Heart left ventricle (tissue), 16 donors: ENCODE measurements at regions of chr7 and their contacts with region 1.

Region 1: DNA sequence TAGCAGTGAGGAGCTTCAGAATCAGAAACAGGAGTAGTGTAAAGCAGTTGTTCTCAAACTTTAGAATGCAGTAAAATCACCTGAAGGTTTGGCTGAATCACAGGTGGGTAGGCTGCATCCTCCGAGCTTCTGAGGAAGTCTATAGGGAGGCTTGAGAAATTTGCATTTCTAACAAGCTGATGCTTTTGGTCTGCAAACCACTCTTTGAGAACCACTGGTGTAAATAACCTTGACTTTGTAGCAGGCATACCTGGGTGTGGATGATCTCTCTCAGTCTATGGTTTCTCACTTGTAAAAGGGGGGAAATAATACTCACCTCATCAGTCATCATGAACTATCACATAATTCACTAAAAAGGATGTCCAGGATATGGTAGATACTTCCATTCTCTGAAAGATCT is 118.1 kb downstream of the SRI start:
- DNase-seq: no peak
- ATAC-seq: no peak
- H3K4me3 ChIP-seq: no peak overlapping the region
- H3K27ac ChIP-seq: no peak overlapping the region
- H3K4me1 ChIP-seq: peaks cover 0 to 5% (median 0%) of the 10 kb centered on the region in 12 donors
- H3K27me3 ChIP-seq: no peaks in the 10 kb centered on the region
- CTCF ChIP-seq: no peak
- POLR2A ChIP-seq: no peak

Region 2: GRCh38 chr7:87806150-87806549 is 295.6 kb before region 1 on chr7:
- intact Hi-C with region 1: loop called in 3 of 10 experiments (anchors 5 to 10 kb)
- DNase-seq: no peak
- ATAC-seq: no peak
- H3K4me3 ChIP-seq: no peak overlapping the region
- H3K27ac ChIP-seq: no peak overlapping the region
- H3K4me1 ChIP-seq: no peaks in the 10 kb centered on the region
- H3K27me3 ChIP-seq: no peaks in the 10 kb centered on the region
- CTCF ChIP-seq: no peak
- POLR2A ChIP-seq: no peak

Region 3: GRCh38 chr7:87933945-87934698 is 167.6 kb before region 1 on chr7 and contains the start of gene ADAM22:
- intact Hi-C with region 1: loop called in 2 of 10 experiments (anchors 10 kb)
- DNase-seq: peak; percentile 88 to 91 (median 89)
- ATAC-seq: peak; percentile 96 to 100 (median 100)
- H3K4me3 ChIP-seq: peak within 1 kb of the TSS; percentile 58 to 93 (median 79)
- H3K27ac ChIP-seq: peak within 1 kb of the TSS in 6 of 12 donors; percentile 28 to 79 (median 55)
- H3K4me1 ChIP-seq: peaks cover 0 to 14% (median 6%) of the 10 kb centered on the region in 12 donors
- H3K27me3 ChIP-seq: no peaks in the 10 kb centered on the region
- CTCF ChIP-seq: peak in 4 of 12 donors; percentile 9 to 42 (median 18)
- POLR2A ChIP-seq: no peak
- total RNA-seq, gene ADAM22: 0.75 to 3.4 (median 1.5) TPM

Region 4: DNA sequence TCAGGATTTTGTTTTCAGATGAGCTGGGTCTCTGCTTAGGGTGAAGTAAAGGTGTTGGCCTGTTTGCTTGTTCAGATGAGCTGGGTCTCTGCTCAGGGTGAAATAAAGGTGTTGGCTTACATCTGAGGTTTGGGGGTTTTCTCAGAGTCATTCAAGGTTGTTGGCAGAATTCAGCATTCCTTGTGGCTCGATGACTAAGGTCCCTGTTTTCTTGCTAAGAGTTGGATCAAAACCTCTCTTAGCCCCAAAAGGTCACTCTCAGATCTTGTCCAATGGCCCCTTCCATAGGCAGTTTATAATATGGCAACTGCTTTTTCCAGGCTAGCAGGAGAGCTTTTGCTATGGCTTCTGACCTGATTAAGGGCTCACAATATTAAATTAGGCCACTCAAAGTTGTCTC is 61.1 kb before region 1 on chr7:
- intact Hi-C with region 1: loop called in 1 of 10 experiments (anchors 10 kb)
- DNase-seq: no peak
- ATAC-seq: no peak
- H3K4me3 ChIP-seq: no peak overlapping the region
- H3K27ac ChIP-seq: no peak overlapping the region
- H3K4me1 ChIP-seq: peaks cover 0 to 4% (median 0%) of the 10 kb centered on the region in 12 donors
- H3K27me3 ChIP-seq: no peaks in the 10 kb centered on the region
- CTCF ChIP-seq: no peak
- POLR2A ChIP-seq: no peak

Region 5: GRCh38 chr7:88169717-88170320 is 68.0 kb after region 1 on chr7:
- intact Hi-C with region 1: loop called in 1 of 10 experiments (anchors 10 kb)
- DNase-seq: no peak
- ATAC-seq: no peak
- H3K4me3 ChIP-seq: no peak overlapping the region
- H3K27ac ChIP-seq: no peak overlapping the region
- H3K4me1 ChIP-seq: peaks cover 0 to 6% (median 0%) of the 10 kb centered on the region in 12 donors
- H3K27me3 ChIP-seq: no peaks in the 10 kb centered on the region
- CTCF ChIP-seq: peak; percentile 36 to 68 (median 52)
- POLR2A ChIP-seq: no peak

Region 6: GRCh38 chr7:88218836-88219605 is 117.3 kb after region 1 on chr7:
- intact Hi-C with region 1: no loop called
- DNase-seq: peak; percentile 42 to 65 (median 49)
- ATAC-seq: peak; percentile 20 to 69 (median 48)
- H3K4me3 ChIP-seq: peak overlapping the region; percentile 69 to 98 (median 90)
- H3K27ac ChIP-seq: peak overlapping the region; percentile 64 to 96 (median 89)
- H3K4me1 ChIP-seq: peaks cover 0 to 26% (median 14%) of the 10 kb centered on the region in 12 donors
- H3K27me3 ChIP-seq: no peaks in the 10 kb centered on the region
- CTCF ChIP-seq: no peak
- POLR2A ChIP-seq: no peak